ENCODE measurements at regions of chr21 and their contacts with region 1.

Region 1: DNA sequence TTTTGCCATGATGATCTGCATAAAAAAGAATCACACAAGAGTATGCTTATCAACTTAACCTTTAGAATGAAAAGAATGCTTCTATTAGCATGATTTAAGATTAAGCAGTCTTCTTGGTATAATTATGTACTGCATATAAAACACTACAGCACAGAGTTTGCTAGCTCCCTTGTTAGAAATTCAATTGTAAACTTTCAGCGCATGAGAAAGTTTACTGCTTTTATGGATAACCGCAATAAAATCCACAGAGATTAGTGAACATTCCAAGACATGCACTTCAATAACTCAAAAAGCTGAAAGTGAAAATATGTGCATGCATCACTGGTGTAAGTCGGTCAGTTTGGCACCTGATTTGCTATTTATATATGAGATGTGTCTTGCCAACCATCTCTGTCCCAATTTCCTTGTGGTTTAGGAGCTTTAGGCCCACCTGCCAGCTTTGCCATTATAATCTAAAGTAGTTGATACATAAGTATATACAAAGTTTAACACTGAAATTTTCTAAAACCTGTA is 16.9 kb downstream of the CCT8 start:
- DNase-seq: no peak
- ATAC-seq: no peak
- H3K4me3 ChIP-seq: no peak overlapping the region
- H3K4me3 Mint-ChIP-seq: no peak overlapping the region
- H3K27ac ChIP-seq: no peak overlapping the region
- H3K27ac Mint-ChIP-seq: no peak overlapping the region
- H3K4me1 ChIP-seq: no peaks in the 10 kb centered on the region
- H3K4me1 Mint-ChIP-seq: peaks cover 0 to 1% (median 0%) of the 10 kb centered on the region in 3 donors
- H3K27me3 ChIP-seq: no peaks in the 10 kb centered on the region
- H3K27me3 Mint-ChIP-seq: no peaks in the 10 kb centered on the region

Region 2: GRCh38 chr21:29073222-29074006 is 16.8 kb after region 1 on chr21 and contains the start of gene CCT8:
- CTCF ChIA-PET with region 1: interaction called in 1 of 2 experiments, 3 read pairs
- POLR2A ChIA-PET with region 1: interaction called, 4 to 10 read pairs
- DNase-seq: peak; percentile 94 to 100 (median 99)
- ATAC-seq: peak; percentile 91 to 94 (median 92)
- H3K4me3 ChIP-seq: peak within 1 kb of the TSS; percentile 89 to 97
- H3K4me3 Mint-ChIP-seq: peak within 1 kb of the TSS; percentile 98 to 100 (median 100)
- H3K27ac ChIP-seq: peak within 1 kb of the TSS; percentile 84
- H3K27ac Mint-ChIP-seq: peak within 1 kb of the TSS; percentile 98 to 99
- H3K4me1 ChIP-seq: peaks cover 30 to 31% of the 10 kb centered on the region in 2 experiments
- H3K4me1 Mint-ChIP-seq: peaks cover 51 to 68% (median 67%) of the 10 kb centered on the region in 3 donors
- H3K27me3 ChIP-seq: no peaks in the 10 kb centered on the region
- H3K27me3 Mint-ChIP-seq: no peaks in the 10 kb centered on the region
- total RNA-seq, gene CCT8: 103 to 131 (median 115) TPM

Measured in T-cell (primary cell).